GM10248 (cell line): ENCODE measurements at regions of chr17 and their contacts with region 1.

Region 1: GRCh38 chr17:43483674-43484372 is at the start of gene DHX8:
- DNase-seq: peak; percentile 94
- CTCF ChIP-seq: peak; percentile 100

Region 2: DNA sequence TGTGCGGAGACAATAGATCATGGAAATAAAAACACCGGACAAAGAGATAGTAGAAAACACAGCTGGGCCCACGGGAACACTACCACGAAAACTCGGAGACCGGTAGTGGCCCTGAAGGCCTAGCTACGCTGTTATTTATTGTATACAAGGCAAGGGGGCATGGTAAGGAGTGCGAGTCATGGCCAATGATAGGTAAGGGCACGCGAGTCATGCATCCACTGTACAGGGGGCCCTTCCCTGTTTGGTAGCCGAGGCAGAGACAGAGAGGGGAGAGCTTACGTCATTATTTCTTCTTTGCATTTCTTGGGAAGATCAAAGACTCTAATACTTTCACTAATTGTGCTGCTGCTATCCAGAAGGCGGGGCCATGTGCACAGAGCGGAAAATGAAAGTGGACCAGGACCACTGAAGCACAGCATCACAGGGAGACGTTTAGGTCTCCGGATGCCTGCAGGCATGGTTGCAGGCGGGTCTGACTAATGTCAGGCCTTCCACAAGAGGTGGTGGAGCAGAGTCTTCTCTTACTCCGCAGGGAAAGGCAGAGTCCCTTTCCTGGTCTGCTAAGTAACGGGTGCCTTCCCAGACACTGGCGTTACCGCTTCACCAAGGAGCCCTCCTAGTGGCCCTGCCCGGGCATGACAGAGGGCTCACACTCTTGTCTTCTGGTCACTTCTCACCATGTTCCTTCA is 159.5 kb before region 1 on chr17:
- CTCF ChIA-PET with region 1: no interaction called
- POLR2A ChIA-PET with region 1: no interaction called
- DNase-seq: no peak
- CTCF ChIP-seq: peak; percentile 4

Region 3: GRCh38 chr17:43360739-43361505 is 122.9 kb before region 1 on chr17:
- CTCF ChIA-PET with region 1: interaction called, 16 read pairs
- POLR2A ChIA-PET with region 1: interaction called, 27 read pairs
- DNase-seq: peak; percentile 84
- CTCF ChIP-seq: no peak

Region 4: DNA sequence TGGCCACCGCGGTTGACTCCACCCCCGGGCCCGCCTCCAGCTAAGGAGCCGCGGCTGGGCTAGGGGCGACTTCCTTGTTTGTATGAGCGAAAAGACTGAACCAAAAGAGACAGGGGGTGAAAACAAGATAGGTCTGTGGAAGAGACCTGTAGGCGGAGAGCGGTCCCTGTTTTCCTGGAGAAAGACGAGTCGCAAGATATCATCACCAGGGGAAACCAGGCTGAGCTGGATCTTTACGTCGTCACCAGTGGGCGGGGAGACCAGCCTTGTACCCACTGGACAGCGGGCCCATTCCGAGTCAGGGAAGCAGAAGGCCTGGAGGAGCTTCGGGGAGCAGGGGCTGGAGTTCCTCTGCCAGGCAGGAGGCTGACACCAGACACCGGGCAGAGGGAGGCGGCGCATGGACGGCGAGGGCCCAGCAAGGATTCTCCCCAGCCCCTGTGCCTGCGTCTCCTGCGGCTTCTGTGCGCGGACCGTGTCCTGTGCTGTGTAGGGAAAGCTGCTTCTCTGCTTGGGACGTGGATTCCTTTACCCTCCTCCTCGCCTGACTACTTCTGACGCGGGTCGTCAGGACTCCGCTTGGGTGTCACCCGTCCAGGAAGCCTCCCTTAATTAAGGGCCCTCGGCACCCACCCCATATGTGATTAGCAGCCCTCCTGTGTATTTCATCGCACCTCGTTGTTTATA is 95.3 kb before region 1 on chr17:
- CTCF ChIA-PET with region 1: interaction called, 266 read pairs
- POLR2A ChIA-PET with region 1: interaction called, 7 read pairs
- DNase-seq: peak; percentile 86
- CTCF ChIP-seq: no peak

Region 5: DNA sequence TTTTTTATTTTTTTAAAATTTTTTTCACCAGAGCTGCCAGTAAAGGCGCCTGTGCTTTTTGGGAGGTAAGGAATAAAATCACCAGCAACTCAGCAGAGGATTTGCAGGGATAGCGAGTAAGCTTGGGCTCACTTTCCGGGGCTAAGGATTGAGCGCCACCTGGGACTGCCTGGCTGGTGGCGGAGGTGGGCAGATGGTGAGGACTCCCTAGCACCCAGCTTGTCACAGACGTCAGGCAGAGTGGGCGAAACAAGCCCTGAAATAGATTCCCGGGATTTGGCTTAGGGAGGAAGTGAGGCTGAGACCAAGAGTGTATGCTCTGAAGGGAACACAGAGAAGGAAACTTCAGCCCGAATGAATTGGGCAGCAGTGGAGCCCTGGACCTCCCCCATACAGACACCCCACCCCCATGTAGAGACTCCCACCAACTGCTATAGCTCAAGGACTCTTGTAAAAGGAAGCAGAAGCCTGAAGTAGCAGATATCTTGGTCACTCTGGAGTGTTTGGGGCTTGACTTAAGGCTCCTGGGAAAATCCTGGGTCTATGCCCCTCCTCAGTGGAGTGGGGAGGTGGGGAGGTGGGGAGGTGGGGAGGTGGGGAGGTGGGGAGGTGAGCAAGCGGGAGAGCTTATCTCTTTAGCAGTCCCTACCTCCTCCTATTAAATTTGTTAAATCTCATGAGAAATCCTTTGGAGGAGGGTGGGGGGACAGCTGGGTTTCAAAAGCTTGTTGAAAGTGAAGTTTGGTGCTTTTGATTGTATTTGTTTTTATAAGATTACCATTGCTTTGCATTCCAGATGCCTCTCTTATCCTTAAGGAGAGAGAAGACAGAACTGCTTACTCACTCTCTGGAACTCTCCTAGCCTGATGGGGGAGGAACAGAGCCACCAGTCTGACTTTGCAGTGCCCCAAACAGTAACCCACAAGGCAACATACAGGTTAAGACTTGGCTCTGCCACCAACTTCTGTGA is 76.9 kb before region 1 on chr17:
- CTCF ChIA-PET with region 1: interaction called, 266 read pairs
- POLR2A ChIA-PET with region 1: no interaction called
- DNase-seq: no peak
- CTCF ChIP-seq: no peak

Region 6: GRCh38 chr17:43517615-43518386 is 34.0 kb after region 1 on chr17:
- CTCF ChIA-PET with region 1: interaction called, 23 read pairs
- POLR2A ChIA-PET with region 1: no interaction called
- DNase-seq: peak; percentile 71
- CTCF ChIP-seq: no peak

Region 7: GRCh38 chr17:43584666-43585102 is 100.9 kb after region 1 on chr17:
- CTCF ChIA-PET with region 1: no interaction called
- POLR2A ChIA-PET with region 1: no interaction called
- DNase-seq: no peak
- CTCF ChIP-seq: no peak